ENCODE measurements at regions of chr12 and their contacts with region 1.

Region 1: DNA sequence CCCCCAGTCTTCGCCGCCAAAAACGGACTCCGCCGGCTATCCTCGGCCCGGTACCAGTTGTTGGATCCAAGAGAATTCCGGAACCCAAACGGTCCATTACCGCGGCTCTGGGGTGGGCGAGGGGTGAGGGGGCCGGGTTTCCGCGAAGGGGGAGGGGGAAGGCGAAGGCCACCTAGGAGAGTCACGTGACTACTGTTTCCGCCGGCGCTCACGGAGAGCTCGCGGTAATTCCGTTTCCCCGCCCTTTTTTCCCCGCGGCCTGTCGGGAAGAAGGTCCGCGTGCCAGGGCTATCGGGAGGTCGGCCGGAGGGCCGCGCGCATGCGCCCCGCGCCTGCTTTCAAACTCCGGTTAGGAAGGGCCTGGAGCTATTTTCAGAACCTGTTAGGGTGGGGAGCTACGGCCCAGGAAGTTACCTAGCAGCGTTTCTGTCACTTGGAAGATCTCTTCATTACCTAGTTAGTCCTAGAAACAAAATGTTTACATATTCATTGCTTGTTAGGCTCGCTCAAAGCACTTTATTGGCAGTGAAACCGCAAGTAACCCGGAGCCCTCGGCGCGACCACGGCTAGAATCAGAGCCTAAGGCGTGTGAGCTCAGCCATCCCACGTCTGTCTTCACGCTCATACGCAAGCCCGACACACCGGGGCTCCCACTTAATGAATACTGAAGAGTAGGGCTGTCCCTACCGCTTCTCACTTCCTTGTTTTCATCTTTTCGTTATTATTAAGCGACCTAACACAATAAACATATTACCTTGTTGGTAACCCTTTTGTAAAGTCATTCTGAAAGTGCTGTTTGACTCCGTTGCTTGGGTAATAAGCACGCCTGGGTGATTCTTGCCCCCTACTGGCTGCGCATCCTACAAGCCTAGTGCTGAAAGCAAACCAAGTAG is 624 bp upstream of the SBNO1 start:
- DNase-seq: peak; percentile 91
- ATAC-seq: peak; percentile 69
- H3K4me3 Mint-ChIP-seq: peak overlapping the region; percentile 90
- H3K27ac Mint-ChIP-seq: peak overlapping the region; percentile 99
- H3K4me1 Mint-ChIP-seq: peaks cover 21% of the 10 kb centered on the region
- H3K27me3 Mint-ChIP-seq: no peaks in the 10 kb centered on the region
- CTCF ChIP-seq: no peak

Region 2: GRCh38 chr12:122965851-122966722 is 399.2 kb before region 1 on chr12 and contains the start of gene ABCB9:
- CTCF ChIA-PET with region 1: no interaction called
- POLR2A ChIA-PET with region 1: no interaction called
- intact Hi-C with region 1: loop called (anchors 2 kb)
- DNase-seq: peak; percentile 88
- ATAC-seq: peak; percentile 99
- H3K4me3 Mint-ChIP-seq: peak within 1 kb of the TSS; percentile 69
- H3K27ac Mint-ChIP-seq: peak within 1 kb of the TSS; percentile 32
- H3K4me1 Mint-ChIP-seq: peaks cover 10% of the 10 kb centered on the region
- H3K27me3 Mint-ChIP-seq: no peaks in the 10 kb centered on the region
- CTCF ChIP-seq: no peak
- total RNA-seq, gene ABCB9: 2.0 and 4.6 TPM in 2 replicates

Region 3: GRCh38 chr12:123278101-123278627 is 87.1 kb before region 1 on chr12:
- CTCF ChIA-PET with region 1: no interaction called
- POLR2A ChIA-PET with region 1: interaction called, 9 read pairs
- intact Hi-C with region 1: loop called (anchors 2 kb)
- DNase-seq: no peak
- ATAC-seq: peak; percentile 84
- H3K4me3 Mint-ChIP-seq: no peak overlapping the region
- H3K27ac Mint-ChIP-seq: peak overlapping the region; percentile 67
- H3K4me1 Mint-ChIP-seq: peaks cover 7% of the 10 kb centered on the region
- H3K27me3 Mint-ChIP-seq: no peaks in the 10 kb centered on the region
- CTCF ChIP-seq: no peak

Region 4: GRCh38 chr12:123401753-123402683 is 36.7 kb after region 1 on chr12:
- CTCF ChIA-PET with region 1: no interaction called
- POLR2A ChIA-PET with region 1: interaction called, 11 read pairs
- intact Hi-C with region 1: no loop called
- DNase-seq: no peak
- ATAC-seq: no peak
- H3K4me3 Mint-ChIP-seq: no peak overlapping the region
- H3K27ac Mint-ChIP-seq: peak overlapping the region; percentile 8
- H3K4me1 Mint-ChIP-seq: peaks cover 8% of the 10 kb centered on the region
- H3K27me3 Mint-ChIP-seq: no peaks in the 10 kb centered on the region
- CTCF ChIP-seq: no peak

Region 5: DNA sequence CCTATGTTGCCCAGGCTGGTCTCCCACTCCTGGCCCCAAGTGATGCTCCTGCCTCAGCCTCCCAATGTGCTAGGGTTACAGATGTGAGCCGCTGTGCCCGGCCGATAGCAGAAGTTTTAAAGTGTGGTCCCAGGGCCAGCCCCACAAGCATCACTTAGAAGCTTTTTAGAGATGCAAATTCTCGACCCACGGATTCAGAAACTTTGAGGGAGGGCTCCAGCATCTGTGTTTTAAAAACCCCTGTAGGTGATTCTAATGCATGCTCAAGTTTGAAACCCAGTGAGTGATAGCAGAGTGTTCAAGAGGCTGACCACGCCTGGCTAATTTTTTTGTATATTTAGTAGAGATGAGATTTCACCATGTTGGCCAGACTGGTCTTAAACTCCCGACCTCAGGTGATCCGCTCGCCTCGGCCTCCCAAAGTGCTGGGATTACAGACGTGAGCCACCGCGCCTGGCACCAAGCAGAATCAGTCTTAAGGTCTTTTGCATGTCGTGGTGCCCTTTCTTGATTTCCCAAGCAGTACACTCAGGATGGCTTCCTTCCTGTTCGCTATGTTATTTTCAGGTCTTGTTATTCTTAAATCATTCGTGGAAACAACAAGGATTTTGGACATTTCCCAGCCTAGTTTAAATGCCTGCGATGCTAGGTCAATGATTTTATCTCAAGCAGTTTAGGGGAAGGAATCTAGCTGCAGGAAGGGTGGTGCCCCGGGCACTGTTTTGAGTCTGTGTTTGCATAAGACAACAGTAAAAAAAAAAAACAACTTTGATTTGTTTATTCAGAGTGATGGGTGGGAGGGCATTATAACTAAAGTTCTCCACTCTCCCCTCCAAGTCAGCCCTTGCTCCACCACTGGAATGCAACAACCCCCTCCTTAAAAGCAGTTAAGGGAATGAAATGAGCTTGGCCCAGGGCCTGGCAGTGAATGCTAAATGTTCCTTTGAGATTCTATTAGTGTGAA is 80.4 kb after region 1 on chr12:
- CTCF ChIA-PET with region 1: no interaction called
- POLR2A ChIA-PET with region 1: interaction called, 40 read pairs
- intact Hi-C with region 1: no loop called
- DNase-seq: no peak
- ATAC-seq: peak; percentile 53
- H3K4me3 Mint-ChIP-seq: peak overlapping the region; percentile 75
- H3K27ac Mint-ChIP-seq: peak overlapping the region; percentile 93
- H3K4me1 Mint-ChIP-seq: peaks cover 59% of the 10 kb centered on the region
- H3K27me3 Mint-ChIP-seq: no peaks in the 10 kb centered on the region
- CTCF ChIP-seq: no peak

Region 6: GRCh38 chr12:123580772-123581171 is 215.5 kb after region 1 on chr12:
- CTCF ChIA-PET with region 1: interaction called, 3 read pairs
- POLR2A ChIA-PET with region 1: interaction called, 6 read pairs
- intact Hi-C with region 1: loop called (anchors 1 kb)
- DNase-seq: no peak
- ATAC-seq: no peak
- H3K4me3 Mint-ChIP-seq: no peak overlapping the region
- H3K27ac Mint-ChIP-seq: no peak overlapping the region
- H3K4me1 Mint-ChIP-seq: peaks cover 26% of the 10 kb centered on the region
- H3K27me3 Mint-ChIP-seq: no peaks in the 10 kb centered on the region
- CTCF ChIP-seq: no peak

Region 7: DNA sequence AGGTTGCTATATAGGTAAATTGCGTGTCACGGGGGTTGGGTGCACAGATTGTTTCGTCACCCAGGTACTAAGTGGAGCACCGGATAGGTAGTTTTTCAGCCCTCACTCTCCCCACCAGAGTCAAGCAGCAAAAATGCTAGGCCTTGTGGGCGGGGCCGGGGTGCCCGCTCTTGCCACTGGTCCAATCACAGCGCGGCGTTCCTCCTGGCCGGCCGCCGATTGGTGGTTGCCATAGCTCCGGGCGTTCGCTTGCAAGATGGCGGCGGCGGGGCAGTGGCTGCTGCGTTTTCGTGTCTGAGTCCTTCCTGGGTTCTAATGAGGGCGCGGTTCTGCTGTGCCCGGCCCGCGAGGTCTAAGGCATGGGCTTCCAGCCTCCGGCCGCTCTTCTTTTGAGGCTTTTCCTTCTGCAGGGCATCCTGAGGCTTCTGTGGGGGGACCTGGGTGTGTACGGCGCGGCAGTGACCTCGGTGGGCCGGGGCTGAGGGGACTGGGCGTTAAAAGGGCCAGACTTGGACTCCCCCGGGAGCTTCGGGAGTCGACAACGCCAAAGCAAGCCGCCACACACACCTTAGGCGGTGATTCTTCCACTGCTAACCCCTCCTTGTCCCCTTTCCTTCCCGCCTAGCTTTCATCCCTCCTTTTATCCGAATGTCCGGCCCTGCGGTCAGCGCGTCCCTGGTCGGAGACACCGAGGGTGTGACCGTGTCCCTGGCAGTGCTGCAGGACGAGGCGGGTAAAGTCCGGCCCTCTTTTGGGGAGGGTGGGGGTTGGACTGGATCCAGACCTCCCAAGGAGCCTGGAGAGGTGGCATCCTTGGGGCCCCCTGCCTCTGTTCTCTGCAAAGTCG is 305.8 kb after region 1 on chr12 and contains the start of gene TCTN2:
- CTCF ChIA-PET with region 1: no interaction called
- POLR2A ChIA-PET with region 1: no interaction called
- intact Hi-C with region 1: loop called (anchors 2 kb)
- DNase-seq: peak; percentile 90
- ATAC-seq: peak; percentile 100
- H3K4me3 Mint-ChIP-seq: peak within 1 kb of the TSS; percentile 91
- H3K27ac Mint-ChIP-seq: peak within 1 kb of the TSS; percentile 35
- H3K4me1 Mint-ChIP-seq: peaks cover 11% of the 10 kb centered on the region
- H3K27me3 Mint-ChIP-seq: no peaks in the 10 kb centered on the region
- CTCF ChIP-seq: no peak
- total RNA-seq, gene TCTN2: 10.3 and 11.9 TPM in 2 replicates

Measured in activated B cell treated with CpG ODN at 0.5 μM for 24 hours (primary cell).